Calu3 (cell line): ENCODE measurements at regions of chr5 and their contacts with region 1.

Region 1: GRCh38 chr5:102971697-102972293 is 148.1 kb downstream of the GIN1 start:
- DNase-seq: no peak
- H3K4me3 Mint-ChIP-seq: no peak overlapping the region
- H3K27ac Mint-ChIP-seq: no peak overlapping the region
- H3K4me1 Mint-ChIP-seq: no peaks in the 10 kb centered on the region
- H3K27me3 Mint-ChIP-seq: no peaks in the 10 kb centered on the region
- CTCF ChIP-seq: no peak

Region 2: DNA sequence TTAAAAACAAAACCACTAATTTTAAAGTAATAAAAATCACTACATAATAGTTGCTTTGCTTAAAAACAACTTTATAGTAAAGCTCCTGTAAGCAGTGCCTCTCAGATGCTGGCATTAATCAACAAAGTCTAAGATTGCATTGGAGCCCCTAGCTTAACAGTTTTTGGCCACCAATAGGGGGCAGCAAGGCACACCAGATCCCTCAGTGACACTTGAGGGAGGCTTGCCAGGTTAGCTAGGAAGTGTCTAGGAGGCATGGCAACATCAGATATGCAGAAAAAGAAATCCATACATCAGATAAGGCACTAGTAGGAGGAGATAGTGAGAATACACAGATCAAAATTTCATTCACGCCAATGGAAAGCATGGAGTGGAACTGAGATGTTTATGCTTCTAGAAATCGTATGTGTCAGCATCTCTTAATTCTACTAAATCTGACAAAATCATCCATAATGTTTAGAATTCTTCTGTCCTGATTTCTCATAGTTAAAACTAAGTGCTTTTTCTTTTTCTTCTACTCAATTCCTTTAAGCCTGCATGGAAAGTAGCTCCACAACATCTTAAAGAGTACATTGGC is 290.3 kb before region 1 on chr5:
- CTCF ChIA-PET with region 1: interaction called, 9 read pairs
- intact Hi-C with region 1: loop called (anchors 5 kb)
- DNase-seq: peak; percentile 87
- H3K4me3 Mint-ChIP-seq: no peak overlapping the region
- H3K27ac Mint-ChIP-seq: no peak overlapping the region
- H3K4me1 Mint-ChIP-seq: no peaks in the 10 kb centered on the region
- H3K27me3 Mint-ChIP-seq: peaks cover 12% of the 10 kb centered on the region
- CTCF ChIP-seq: peak; percentile 91

Region 3: DNA sequence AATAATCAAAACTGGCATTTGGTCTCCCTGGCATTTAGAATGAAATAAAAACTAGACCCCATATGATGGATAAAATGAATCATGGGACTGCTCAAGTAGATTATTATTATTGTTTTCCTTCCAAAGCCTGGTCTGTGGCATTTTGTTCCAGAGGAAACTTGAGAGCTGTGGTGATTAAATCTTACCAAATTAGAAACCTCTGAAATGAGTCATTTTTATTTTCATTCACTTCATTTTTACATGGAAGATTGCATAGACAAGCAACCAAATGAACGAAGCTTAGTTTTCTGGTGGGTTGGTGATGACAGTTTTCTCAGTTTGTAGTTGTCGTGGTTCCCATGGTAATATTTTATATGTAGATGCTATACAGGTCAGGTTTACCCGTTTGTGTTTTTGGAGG is 193.3 kb before region 1 on chr5:
- CTCF ChIA-PET with region 1: interaction called, 3 read pairs
- intact Hi-C with region 1: loop called (anchors 2 kb)
- DNase-seq: no peak
- H3K4me3 Mint-ChIP-seq: no peak overlapping the region
- H3K27ac Mint-ChIP-seq: no peak overlapping the region
- H3K4me1 Mint-ChIP-seq: peaks cover 9% of the 10 kb centered on the region
- H3K27me3 Mint-ChIP-seq: no peaks in the 10 kb centered on the region
- CTCF ChIP-seq: no peak